ENCODE measurements at regions of chr16 and their contacts with region 1.

Region 1: GRCh38 chr16:89805136-89805905 is 11.1 kb downstream of the FANCA start:
- DNase-seq: peak; percentile 83
- ATAC-seq: peak; percentile 83
- H3K4me3 ChIP-seq: no peak overlapping the region
- H3K27ac ChIP-seq: peak overlapping the region; percentile 72; the same call in 1 of the 2 replicates
- H3K4me1 ChIP-seq: peaks cover 10% of the 10 kb centered on the region
- H3K27me3 ChIP-seq: no peaks in the 10 kb centered on the region
- CTCF ChIP-seq: no peak
- POLR2A ChIP-seq: no peak
- RAD21 ChIP-seq: no peak

Region 2: GRCh38 chr16:89198417-89199240 is 606.7 kb before region 1 on chr16:
- CTCF ChIA-PET with region 1: no interaction called
- POLR2A ChIA-PET with region 1: interaction called, 11 read pairs
- dilution Hi-C with region 1: no loop called
- in situ Hi-C with region 1: no loop called
- intact Hi-C with region 1: no loop called
- DNase-seq: no peak
- ATAC-seq: no peak
- H3K4me3 ChIP-seq: no peak overlapping the region
- H3K27ac ChIP-seq: no peak overlapping the region
- H3K4me1 ChIP-seq: peaks cover 7% of the 10 kb centered on the region
- H3K27me3 ChIP-seq: peaks cover 35% of the 10 kb centered on the region
- CTCF ChIP-seq: no peak
- POLR2A ChIP-seq: no peak
- RAD21 ChIP-seq: no peak

Region 3: GRCh38 chr16:89363621-89364393 is 441.5 kb before region 1 on chr16:
- CTCF ChIA-PET with region 1: no interaction called
- POLR2A ChIA-PET with region 1: no interaction called
- dilution Hi-C with region 1: no loop called
- in situ Hi-C with region 1: no loop called
- intact Hi-C with region 1: no loop called
- DNase-seq: peak; percentile 86
- ATAC-seq: peak; percentile 59
- H3K4me3 ChIP-seq: no peak overlapping the region
- H3K27ac ChIP-seq: no peak overlapping the region
- H3K4me1 ChIP-seq: peaks cover 39% of the 10 kb centered on the region
- H3K27me3 ChIP-seq: no peaks in the 10 kb centered on the region
- CTCF ChIP-seq: no peak
- POLR2A ChIP-seq: no peak
- RAD21 ChIP-seq: no peak

Region 4: GRCh38 chr16:89534252-89534756 is 271.0 kb before region 1 on chr16:
- CTCF ChIA-PET with region 1: no interaction called
- POLR2A ChIA-PET with region 1: no interaction called
- dilution Hi-C with region 1: no loop called
- in situ Hi-C with region 1: no loop called
- intact Hi-C with region 1: no loop called
- DNase-seq: no peak
- ATAC-seq: peak; percentile 62; the same call in 1 of the 2 replicates
- H3K4me3 ChIP-seq: no peak overlapping the region
- H3K27ac ChIP-seq: no peak overlapping the region
- H3K4me1 ChIP-seq: no peaks in the 10 kb centered on the region
- H3K27me3 ChIP-seq: no peaks in the 10 kb centered on the region
- CTCF ChIP-seq: no peak
- POLR2A ChIP-seq: no peak
- RAD21 ChIP-seq: no peak